ENCODE measurements at regions of chr17 and their contacts with region 1.

Region 1: DNA sequence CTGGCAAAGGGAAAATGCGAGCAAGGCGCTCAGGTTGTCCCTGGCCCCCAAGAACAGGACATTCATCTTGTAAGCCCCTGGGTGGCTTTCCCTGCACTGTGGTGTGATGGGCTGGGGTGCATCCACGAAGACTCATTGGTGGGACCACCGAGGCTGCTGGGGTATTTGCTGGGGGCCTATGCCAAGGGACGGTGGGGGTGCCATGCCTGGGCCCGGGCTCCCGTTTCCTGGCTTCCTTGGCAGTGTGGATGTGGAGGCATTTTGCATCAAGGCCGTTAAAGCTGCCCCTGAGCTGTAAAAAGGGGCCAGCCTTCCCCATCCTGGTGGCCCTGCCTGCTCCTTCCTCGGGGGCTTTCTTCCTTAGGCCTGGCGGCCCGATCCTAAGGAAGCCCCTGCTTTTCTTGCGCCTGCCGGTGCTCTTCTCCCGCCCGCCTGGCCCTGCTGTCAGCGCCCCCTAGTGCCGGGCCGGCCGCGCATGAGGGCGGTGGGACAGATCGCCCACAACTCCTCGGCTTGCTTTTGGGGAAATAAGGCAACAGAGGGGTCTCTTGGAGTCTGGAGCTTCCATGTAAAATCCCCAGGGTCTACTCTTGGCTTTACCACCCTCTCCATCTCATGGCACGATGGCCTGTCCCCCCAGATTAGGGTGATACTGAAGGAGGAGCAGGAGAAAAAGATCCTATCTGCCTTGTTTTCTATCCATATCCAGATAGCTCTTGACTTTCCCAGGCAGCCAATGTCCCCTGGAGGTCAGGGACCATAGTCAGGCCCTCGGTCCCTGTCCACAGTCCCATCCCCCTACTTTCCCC is 9.8 kb upstream of the TBX2 start:
- DNase-seq: peak; percentile 40 to 75 (median 69)
- ATAC-seq: peak; percentile 87
- H3K4me3 ChIP-seq: no peak overlapping the region
- H3K27ac ChIP-seq: no peak overlapping the region
- H3K4me1 ChIP-seq: peaks cover 0 to 10% of the 10 kb centered on the region in 2 experiments; a peak in 2 of 5 replicates
- H3K27me3 ChIP-seq: peaks cover 0 to 48% of the 10 kb centered on the region in 2 experiments; a peak in 3 of 5 replicates
- CTCF ChIP-seq: peak; percentile 69 to 81 (median 77)
- EP300 ChIP-seq: no peak
- POLR2A ChIP-seq: no peak
- RAD21 ChIP-seq: peak; percentile 39 to 77; a peak in 3 of 4 replicates

Region 2: GRCh38 chr17:60720763-60721531 is 668.9 kb before region 1 on chr17:
- CTCF ChIA-PET with region 1: interaction called, 4 read pairs
- POLR2A ChIA-PET with region 1: interaction called, 3 read pairs
- in situ Hi-C with region 1: no loop called
- intact Hi-C with region 1: loop called (anchors 5 kb)
- DNase-seq: peak; percentile 50 to 72 (median 58)
- ATAC-seq: peak; percentile 75
- H3K4me3 ChIP-seq: no peak overlapping the region
- H3K27ac ChIP-seq: no peak overlapping the region
- H3K4me1 ChIP-seq: no peaks in the 10 kb centered on the region
- H3K27me3 ChIP-seq: peaks cover 0 to 4% of the 10 kb centered on the region in 2 experiments; a peak in 3 of 5 replicates
- CTCF ChIP-seq: peak; percentile 60 to 88 (median 77)
- EP300 ChIP-seq: no peak
- POLR2A ChIP-seq: no peak
- RAD21 ChIP-seq: peak; percentile 82 to 91

Region 3: DNA sequence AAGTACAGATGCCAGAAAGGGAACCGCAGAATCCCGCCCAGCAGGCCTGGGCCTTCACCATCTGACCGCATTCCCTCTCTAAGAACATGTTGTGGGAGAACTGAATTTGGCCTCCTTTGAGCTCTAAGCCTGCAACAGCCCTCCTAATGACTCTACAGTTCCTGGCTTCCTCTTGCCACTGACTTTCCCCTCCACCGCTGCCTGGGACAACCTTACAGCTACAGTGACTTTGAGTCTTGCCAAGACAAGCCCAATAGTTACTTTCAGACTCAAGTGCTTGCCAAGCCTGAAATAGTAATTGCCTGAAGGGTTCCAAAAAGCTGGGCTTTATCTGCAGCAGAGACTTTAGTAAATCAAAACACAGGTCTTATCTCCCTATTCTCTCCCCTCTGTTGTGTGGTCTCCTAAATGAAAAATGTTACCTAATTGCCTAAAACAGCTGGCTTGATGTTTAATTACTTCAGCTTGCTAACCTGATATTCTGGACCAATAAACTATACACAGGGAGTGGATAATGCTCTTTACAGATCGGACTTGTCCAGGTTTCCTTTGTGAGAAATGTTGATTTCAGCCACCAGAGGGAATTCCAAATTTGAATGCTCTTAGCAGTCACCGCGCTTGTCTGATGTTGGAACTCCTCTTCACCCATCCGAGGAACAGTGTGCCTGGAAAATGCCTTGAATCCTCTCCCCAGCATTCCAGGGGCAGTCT is 75.4 kb before region 1 on chr17:
- CTCF ChIA-PET with region 1: no interaction called
- POLR2A ChIA-PET with region 1: no interaction called
- in situ Hi-C with region 1: no loop called
- intact Hi-C with region 1: no loop called
- DNase-seq: no peak
- ATAC-seq: no peak
- H3K4me3 ChIP-seq: no peak overlapping the region
- H3K27ac ChIP-seq: no peak overlapping the region
- H3K4me1 ChIP-seq: no peaks in the 10 kb centered on the region
- H3K27me3 ChIP-seq: peaks cover 27 to 57% of the 10 kb centered on the region in 2 experiments
- CTCF ChIP-seq: no peak
- EP300 ChIP-seq: no peak
- POLR2A ChIP-seq: no peak
- RAD21 ChIP-seq: no peak

Region 4: DNA sequence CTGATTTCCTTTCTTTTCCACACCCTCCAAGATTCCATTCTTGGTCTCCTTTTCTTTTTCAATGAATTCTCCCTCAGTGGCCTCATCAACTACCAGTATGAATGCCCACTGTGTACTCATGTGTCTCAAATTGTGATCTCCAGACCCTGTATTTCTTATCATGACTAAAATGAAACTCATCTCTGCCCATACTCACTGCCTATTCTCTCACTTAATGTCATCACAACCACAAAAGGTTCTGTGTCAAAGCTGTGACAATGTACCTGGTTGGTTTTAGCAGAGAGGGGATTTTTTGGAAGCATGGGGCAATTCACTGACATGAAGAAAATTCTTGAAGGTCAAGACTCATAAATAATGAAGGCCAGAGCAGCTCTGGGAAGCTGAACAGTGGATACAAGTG is 50.8 kb after region 1 on chr17:
- CTCF ChIA-PET with region 1: no interaction called
- POLR2A ChIA-PET with region 1: no interaction called
- in situ Hi-C with region 1: no loop called
- intact Hi-C with region 1: no loop called
- DNase-seq: no peak
- ATAC-seq: no peak
- H3K4me3 ChIP-seq: no peak overlapping the region
- H3K27ac ChIP-seq: no peak overlapping the region
- H3K4me1 ChIP-seq: peaks cover 3 to 11% of the 10 kb centered on the region in 2 experiments; a peak in 3 of 5 replicates
- H3K27me3 ChIP-seq: peaks cover 0 to 9% of the 10 kb centered on the region in 2 experiments; a peak in 3 of 5 replicates
- CTCF ChIP-seq: no peak
- EP300 ChIP-seq: no peak
- POLR2A ChIP-seq: no peak
- RAD21 ChIP-seq: no peak

Region 5: GRCh38 chr17:61486135-61487120 is 96.6 kb after region 1 on chr17:
- CTCF ChIA-PET with region 1: no interaction called
- POLR2A ChIA-PET with region 1: no interaction called
- in situ Hi-C with region 1: no loop called
- intact Hi-C with region 1: no loop called
- DNase-seq: no peak
- ATAC-seq: no peak
- H3K4me3 ChIP-seq: no peak overlapping the region
- H3K27ac ChIP-seq: no peak overlapping the region
- H3K4me1 ChIP-seq: peaks cover 0 to 3% of the 10 kb centered on the region in 2 experiments; a peak in 1 of 5 replicates
- H3K27me3 ChIP-seq: peaks cover 32 to 70% of the 10 kb centered on the region in 2 experiments
- CTCF ChIP-seq: no peak
- EP300 ChIP-seq: no peak
- POLR2A ChIP-seq: no peak
- RAD21 ChIP-seq: no peak

Region 6: GRCh38 chr17:61574542-61575174 is 184.8 kb after region 1 on chr17:
- CTCF ChIA-PET with region 1: no interaction called
- POLR2A ChIA-PET with region 1: no interaction called
- in situ Hi-C with region 1: no loop called
- intact Hi-C with region 1: no loop called
- DNase-seq: peak in 2 of 4 experiments; percentile 11 to 18
- ATAC-seq: peak; percentile 45; the same call in 1 of the 3 replicates
- H3K4me3 ChIP-seq: no peak overlapping the region
- H3K27ac ChIP-seq: no peak overlapping the region
- H3K4me1 ChIP-seq: no peaks in the 10 kb centered on the region
- H3K27me3 ChIP-seq: no peaks in the 10 kb centered on the region; a peak in 1 of 5 replicates
- CTCF ChIP-seq: peak in 2 of 3 experiments; percentile 18 to 40; a peak in 2 of 6 replicates
- EP300 ChIP-seq: no peak
- POLR2A ChIP-seq: no peak
- RAD21 ChIP-seq: peak; percentile 26 to 59